ENCODE measurements at regions of chr2 and their contacts with region 1.

Region 1: GRCh38 chr2:109736177-109736827 is 57.8 kb upstream of the RGPD5 start:
- DNase-seq: peak in 3 of 6 donors; percentile 33 to 66 (median 35)
- ATAC-seq: peak in 3 of 4 donors; percentile 87 to 89 (median 89)
- H3K4me3 ChIP-seq: no peak overlapping the region
- H3K27ac ChIP-seq: no peak overlapping the region
- H3K4me1 ChIP-seq: no peaks in the 10 kb centered on the region
- H3K27me3 ChIP-seq: no peaks in the 10 kb centered on the region
- CTCF ChIP-seq: peak in 3 of 4 donors; percentile 47 to 61 (median 53)

Region 2: DNA sequence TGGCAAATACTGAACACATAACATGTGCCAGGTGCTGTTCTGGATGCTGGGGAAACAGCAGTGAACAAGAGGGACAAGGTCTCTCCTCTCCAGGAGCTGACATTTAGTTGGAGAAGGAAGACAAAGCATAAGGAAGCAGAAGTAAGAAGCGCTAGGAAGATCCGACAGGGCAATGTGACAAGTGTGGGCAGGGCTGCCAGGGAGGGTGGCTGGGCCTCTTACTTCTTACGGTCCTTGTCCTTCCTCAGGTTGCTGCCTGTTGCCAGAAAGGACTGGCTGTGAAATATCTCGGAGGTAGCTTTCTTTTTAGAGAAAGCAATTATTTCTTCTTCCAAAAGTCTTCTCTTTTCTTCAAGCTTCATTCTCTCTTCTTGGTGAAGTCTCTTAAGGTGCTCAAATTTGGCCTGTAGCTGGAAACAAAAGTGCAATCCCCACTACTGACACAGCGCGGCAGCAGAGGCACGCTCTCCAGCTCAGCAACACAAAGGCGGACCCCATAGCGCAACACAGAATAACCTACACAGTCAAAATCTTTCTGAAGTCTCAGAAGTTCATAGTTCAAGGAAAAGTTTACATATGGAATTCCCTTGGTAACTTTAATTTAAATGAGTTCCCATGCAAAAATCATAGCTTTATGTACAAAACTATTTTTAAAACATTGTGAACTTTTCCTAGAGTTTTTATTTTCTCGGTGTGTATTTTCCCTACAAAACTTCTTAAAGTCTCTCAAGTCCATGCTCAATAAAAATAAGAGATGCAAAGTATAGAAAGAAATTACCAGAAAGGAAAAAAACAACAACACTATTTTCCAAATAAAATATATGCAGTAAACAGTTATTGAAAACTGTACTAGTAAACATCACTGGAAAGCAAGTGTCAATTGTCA is 190.2 kb before region 1 on chr2:
- intact Hi-C with region 1: loop called in 1 of 3 experiments (anchors 5 kb)
- DNase-seq: peak; percentile 21 to 81 (median 57)
- ATAC-seq: peak; percentile 80 to 99 (median 97)
- H3K4me3 ChIP-seq: no peak overlapping the region
- H3K27ac ChIP-seq: no peak overlapping the region
- H3K4me1 ChIP-seq: peaks cover 0 to 5% (median 0%) of the 10 kb centered on the region in 3 donors
- H3K27me3 ChIP-seq: no peaks in the 10 kb centered on the region
- CTCF ChIP-seq: peak; percentile 48 to 73 (median 71)